GM18951 (cell line): ENCODE measurements at regions of chr7 and their contacts with region 1.

Region 1: DNA sequence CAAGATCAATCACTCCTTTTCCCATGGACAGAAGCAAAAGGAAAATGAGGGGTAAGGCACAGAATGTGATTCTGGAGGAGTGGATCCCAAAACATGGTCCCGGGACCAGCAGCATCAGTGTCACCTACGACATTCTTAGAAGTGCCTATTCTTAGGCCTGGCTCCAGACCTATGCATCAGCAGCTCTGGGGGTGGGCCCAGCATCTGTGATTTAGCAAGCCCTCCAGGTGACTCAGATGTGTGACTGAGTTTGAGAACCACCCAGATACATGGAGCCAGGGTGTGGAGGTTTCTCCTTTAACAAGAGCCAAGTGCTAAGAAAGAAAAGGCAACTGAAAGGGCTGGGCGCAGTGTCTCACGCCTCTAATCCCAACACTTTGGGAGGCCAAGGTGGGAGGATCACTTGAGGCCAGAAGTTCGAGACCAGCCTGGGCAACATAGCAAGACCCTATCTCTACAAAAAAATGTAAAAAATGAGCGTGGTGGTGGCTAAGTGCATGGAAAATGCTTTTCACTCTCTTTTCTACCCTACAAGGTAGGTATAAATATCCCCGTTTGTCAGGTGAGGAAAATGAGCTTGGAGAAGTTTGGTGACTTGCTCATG is 17.1 kb upstream of the ARPC1A start:
- POLR2A ChIP-seq: no peak

Region 2: DNA sequence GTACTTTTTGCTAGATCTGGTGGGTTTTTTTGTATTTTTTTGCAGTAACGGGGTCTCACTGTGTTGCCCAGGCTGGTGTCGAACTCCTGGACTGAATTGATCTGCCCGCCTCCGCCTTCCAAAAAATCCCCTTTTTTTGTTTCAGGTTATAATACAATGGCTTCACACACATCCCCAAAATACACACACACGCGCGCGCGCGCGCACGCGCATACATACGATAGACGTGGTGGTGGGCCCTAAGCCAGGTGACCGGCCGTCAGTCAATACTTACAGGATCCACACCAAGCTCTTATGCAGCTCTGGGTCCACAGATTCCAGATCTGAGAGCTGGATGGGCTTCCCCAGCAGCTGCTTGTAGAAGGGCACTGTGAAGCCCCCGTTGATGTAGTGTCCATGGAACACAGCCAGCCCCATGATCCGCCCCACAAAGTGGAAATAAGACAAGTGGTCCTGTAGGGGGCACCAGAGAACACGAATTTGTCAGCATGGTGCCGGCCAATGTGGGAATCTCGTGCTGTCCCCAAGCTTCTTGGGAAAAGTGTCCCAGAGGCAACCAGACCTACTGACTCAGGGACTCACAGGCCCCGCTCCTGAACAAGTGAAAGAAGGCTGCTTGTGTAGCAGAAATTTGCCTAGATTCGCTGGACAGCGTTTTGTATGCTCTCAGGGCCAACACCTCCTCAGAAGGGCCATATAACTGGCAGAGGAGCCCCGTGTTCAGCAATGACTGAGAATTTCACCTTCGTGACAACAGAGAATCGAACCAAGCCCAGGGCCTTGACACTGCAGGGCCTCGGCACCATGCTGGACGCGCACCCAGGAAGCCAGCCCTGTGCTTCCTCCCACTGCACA is 268.2 kb before region 1 on chr7:
- in situ Hi-C with region 1: loop called (anchors 5 kb)
- POLR2A ChIP-seq: no peak

Region 3: GRCh38 chr7:99485094-99485493 is 176.5 kb after region 1 on chr7:
- in situ Hi-C with region 1: no loop called
- POLR2A ChIP-seq: no peak

Region 4: GRCh38 chr7:100015232-100016209 is 706.9 kb after region 1 on chr7 and contains the start of gene ZKSCAN1:
- in situ Hi-C with region 1: no loop called
- POLR2A ChIP-seq: peak; percentile 92